Activated CD4-positive, alpha-beta T cell treated with anti-CD3 and anti-CD28 coated beads for 36 hours (primary cell): ENCODE measurements at regions of chrX and their contacts with region 1.

Region 1: GRCh38 chrX:74272230-74272629 is 31.8 kb upstream of the ZCCHC13 start:
- DNase-seq: no peak
- ATAC-seq: peak; percentile 66
- H3K4me3 Mint-ChIP-seq: no peak overlapping the region
- H3K27ac Mint-ChIP-seq: no peak overlapping the region
- H3K4me1 Mint-ChIP-seq: peaks cover 10% of the 10 kb centered on the region
- H3K27me3 Mint-ChIP-seq: no peaks in the 10 kb centered on the region

Region 2: GRCh38 chrX:74179071-74179470 is 93.2 kb before region 1 on chrX:
- CTCF ChIA-PET with region 1: no interaction called
- POLR2A ChIA-PET with region 1: no interaction called
- intact Hi-C with region 1: no loop called
- DNase-seq: no peak
- ATAC-seq: no peak
- H3K4me3 Mint-ChIP-seq: no peak overlapping the region
- H3K27ac Mint-ChIP-seq: no peak overlapping the region
- H3K4me1 Mint-ChIP-seq: no peaks in the 10 kb centered on the region
- H3K27me3 Mint-ChIP-seq: no peaks in the 10 kb centered on the region

Region 3: DNA sequence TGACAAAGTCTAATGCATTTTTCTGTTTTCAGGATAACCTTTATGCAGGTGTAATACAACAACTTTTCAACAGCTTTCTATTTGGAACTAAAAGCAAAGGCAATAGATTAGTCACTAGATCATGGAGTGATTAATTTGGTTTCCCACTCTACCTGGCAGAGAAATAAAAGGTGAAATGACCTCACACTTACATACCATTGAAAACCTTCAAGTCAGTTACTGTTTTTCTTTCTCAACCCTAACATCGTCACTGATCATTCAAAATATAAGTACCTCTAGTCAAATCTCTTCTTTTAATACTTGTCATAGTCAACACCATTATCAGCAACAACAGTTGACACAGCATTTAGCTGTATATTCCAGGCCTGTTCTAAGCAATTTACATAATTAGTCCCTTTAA is 53.3 kb before region 1 on chrX:
- CTCF ChIA-PET with region 1: no interaction called
- POLR2A ChIA-PET with region 1: no interaction called
- intact Hi-C with region 1: loop called in 1 of 2 experiments (anchors 2 kb)
- DNase-seq: no peak
- ATAC-seq: peak; percentile 63
- H3K4me3 Mint-ChIP-seq: no peak overlapping the region
- H3K27ac Mint-ChIP-seq: no peak overlapping the region
- H3K4me1 Mint-ChIP-seq: peaks cover 11% of the 10 kb centered on the region
- H3K27me3 Mint-ChIP-seq: no peaks in the 10 kb centered on the region

Region 4: GRCh38 chrX:74536152-74536831 is 264.1 kb after region 1 on chrX:
- CTCF ChIA-PET with region 1: no interaction called
- POLR2A ChIA-PET with region 1: no interaction called
- intact Hi-C with region 1: no loop called
- DNase-seq: peak; percentile 51
- ATAC-seq: peak; percentile 30
- H3K4me3 Mint-ChIP-seq: peak overlapping the region; percentile 66
- H3K27ac Mint-ChIP-seq: peak overlapping the region; percentile 74
- H3K4me1 Mint-ChIP-seq: peaks cover 36% of the 10 kb centered on the region
- H3K27me3 Mint-ChIP-seq: no peaks in the 10 kb centered on the region

Region 5: DNA sequence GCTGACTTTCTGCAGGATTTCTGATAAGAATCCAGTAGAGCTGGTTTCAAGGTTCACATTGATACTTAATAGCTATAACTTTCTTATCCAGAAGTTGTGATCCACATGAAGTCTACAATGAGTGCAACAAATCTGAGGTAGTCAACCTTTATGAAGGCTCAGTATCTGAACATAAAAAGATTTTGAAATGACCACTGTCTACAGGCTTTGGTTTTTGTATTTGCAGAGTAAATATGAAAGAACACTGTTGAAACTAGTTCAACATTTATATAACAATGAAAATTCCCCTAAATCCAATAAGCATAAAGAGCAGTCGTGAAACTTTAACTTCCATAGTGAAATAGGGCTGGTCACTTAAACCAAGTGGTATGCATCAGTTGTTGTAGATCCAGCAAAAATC is 397.8 kb after region 1 on chrX:
- CTCF ChIA-PET with region 1: no interaction called
- POLR2A ChIA-PET with region 1: no interaction called
- intact Hi-C with region 1: no loop called
- DNase-seq: no peak
- ATAC-seq: no peak
- H3K4me3 Mint-ChIP-seq: no peak overlapping the region
- H3K27ac Mint-ChIP-seq: no peak overlapping the region
- H3K4me1 Mint-ChIP-seq: no peaks in the 10 kb centered on the region
- H3K27me3 Mint-ChIP-seq: peaks cover 2% of the 10 kb centered on the region